K562 (cell line): ENCODE measurements at regions of chr10 and their contacts with region 1.

Region 1: DNA sequence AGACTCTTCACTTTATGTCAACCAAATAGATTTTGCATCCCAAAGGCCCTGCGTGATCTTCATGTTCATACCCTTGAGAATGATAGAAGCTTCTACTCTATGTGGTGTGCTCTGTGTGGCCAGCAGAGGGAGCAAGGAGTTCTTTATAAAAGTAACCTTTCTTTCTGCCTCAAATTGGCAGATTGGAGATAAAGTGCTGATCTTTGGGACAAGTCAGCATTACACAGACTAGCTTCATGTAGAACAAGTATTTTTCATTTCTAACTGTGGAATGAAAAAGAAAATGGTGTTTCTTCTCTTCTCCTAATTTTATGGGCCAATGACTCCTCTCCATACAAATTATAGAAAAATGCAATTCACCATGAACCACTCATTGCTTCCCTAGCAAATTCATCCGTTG is 1214.1 kb downstream of the SORCS1 start:
- DNase-seq: peak; percentile 7 to 14 (median 11)
- ATAC-seq: no peak
- H3K4me3 ChIP-seq: no peak overlapping the region
- H3K27ac ChIP-seq: no peak overlapping the region
- H3K4me1 ChIP-seq: no peaks in the 10 kb centered on the region
- H3K27me3 ChIP-seq: no peaks in the 10 kb centered on the region
- CTCF ChIP-seq: peak in 2 of 3 experiments; percentile 42 to 43; a peak in 4 of 6 replicates
- EP300 ChIP-seq: no peak
- POLR2A ChIP-seq: no peak
- RAD21 ChIP-seq: peak; percentile 8 to 34; a peak in 2 of 4 replicates

Region 2: GRCh38 chr10:106175760-106176377 is 225.5 kb after region 1 on chr10:
- CTCF ChIA-PET with region 1: no interaction called
- POLR2A ChIA-PET with region 1: no interaction called
- in situ Hi-C with region 1: no loop called
- intact Hi-C with region 1: loop called (anchors 10 kb)
- DNase-seq: peak in 1 of 4 experiments; percentile 4
- ATAC-seq: no peak
- H3K4me3 ChIP-seq: no peak overlapping the region
- H3K27ac ChIP-seq: no peak overlapping the region
- H3K4me1 ChIP-seq: no peaks in the 10 kb centered on the region
- H3K27me3 ChIP-seq: no peaks in the 10 kb centered on the region
- CTCF ChIP-seq: peak in 1 of 3 experiments; percentile 15; a peak in 2 of 6 replicates
- EP300 ChIP-seq: no peak
- POLR2A ChIP-seq: no peak
- RAD21 ChIP-seq: 0 out of 4 replicates have a peak, but pooled peaks of 1 of the 2 experiments have one; percentile 20